Activated CD4-positive, alpha-beta T cell treated with anti-CD3 and anti-CD28 coated beads for 36 hours (primary cell): ENCODE measurements at regions of chr18 and their contacts with region 1.

Region 1: DNA sequence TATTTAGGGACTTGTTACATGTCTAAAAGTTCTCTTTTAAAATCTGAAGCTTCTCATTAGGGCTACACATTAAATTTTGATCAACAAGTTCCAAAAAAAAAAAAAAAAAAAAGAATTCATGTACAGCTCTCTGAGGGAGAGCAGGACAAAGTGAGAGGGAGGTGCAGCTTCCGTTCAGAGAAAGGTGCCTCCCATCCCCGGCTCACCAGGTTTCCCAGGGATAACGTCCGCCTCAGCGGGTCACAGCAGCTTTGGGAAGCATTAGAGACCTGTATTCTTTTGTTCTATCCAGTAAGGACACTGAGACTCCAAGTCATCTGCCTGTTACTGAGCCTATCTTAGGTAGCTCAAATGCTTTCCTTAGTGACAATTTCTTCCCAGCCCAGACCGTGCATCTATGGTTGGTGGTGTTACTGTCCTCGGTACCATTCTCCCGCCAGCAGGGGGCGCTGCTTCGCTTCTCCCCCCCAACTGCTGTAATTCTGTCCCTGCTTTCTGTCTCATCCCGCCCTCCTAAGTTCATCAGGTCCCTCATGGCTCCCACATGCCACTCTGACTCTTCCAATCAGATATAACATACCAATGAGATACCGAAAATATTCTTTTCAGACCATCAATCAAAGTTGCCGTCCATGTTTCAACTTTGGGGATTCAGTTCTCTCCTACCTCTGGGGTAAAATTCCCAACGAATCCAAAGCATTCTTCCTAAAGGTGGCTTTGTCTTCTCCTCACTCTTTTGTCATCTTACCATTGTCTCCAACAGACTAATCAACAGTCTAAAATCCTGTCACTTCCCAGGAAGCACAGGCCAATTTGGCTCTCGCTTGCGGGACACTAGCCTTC is 466.5 kb downstream of the METTL4 start:
- DNase-seq: peak; percentile 72
- ATAC-seq: peak; percentile 47
- H3K4me3 Mint-ChIP-seq: no peak overlapping the region
- H3K27ac Mint-ChIP-seq: no peak overlapping the region
- H3K4me1 Mint-ChIP-seq: no peaks in the 10 kb centered on the region
- H3K27me3 Mint-ChIP-seq: peaks cover 4% of the 10 kb centered on the region

Region 2: DNA sequence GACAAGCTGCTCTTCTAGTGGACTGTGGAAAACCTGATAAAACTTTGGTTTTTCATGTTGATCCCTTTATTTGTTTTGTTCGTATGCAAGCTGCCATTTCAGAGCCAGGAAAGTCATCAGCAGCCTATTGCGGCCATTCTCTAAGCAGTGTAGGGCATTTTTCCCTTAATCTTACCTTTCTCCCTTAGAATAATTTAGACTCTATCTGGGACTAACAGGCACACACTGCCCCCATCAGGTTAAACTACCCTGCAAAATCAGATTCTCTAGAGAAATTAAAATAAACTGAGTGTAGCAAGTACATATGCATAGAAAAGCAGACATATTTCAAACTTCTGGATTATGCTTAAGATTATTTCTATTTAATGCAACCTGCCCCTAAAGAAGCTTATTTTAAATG is 119.0 kb after region 1 on chr18:
- CTCF ChIA-PET with region 1: interaction called, 4 read pairs
- POLR2A ChIA-PET with region 1: no interaction called
- intact Hi-C with region 1: loop called in 1 of 2 experiments (anchors 5 kb)
- DNase-seq: peak; percentile 22
- ATAC-seq: no peak
- H3K4me3 Mint-ChIP-seq: no peak overlapping the region
- H3K27ac Mint-ChIP-seq: no peak overlapping the region
- H3K4me1 Mint-ChIP-seq: no peaks in the 10 kb centered on the region
- H3K27me3 Mint-ChIP-seq: no peaks in the 10 kb centered on the region

Region 3: GRCh38 chr18:2536493-2536892 is 431.7 kb after region 1 on chr18:
- CTCF ChIA-PET with region 1: interaction called, 16 read pairs
- POLR2A ChIA-PET with region 1: no interaction called
- intact Hi-C with region 1: loop called in 1 of 2 experiments (anchors 5 kb)
- DNase-seq: no peak
- ATAC-seq: no peak
- H3K4me3 Mint-ChIP-seq: no peak overlapping the region
- H3K27ac Mint-ChIP-seq: no peak overlapping the region
- H3K4me1 Mint-ChIP-seq: no peaks in the 10 kb centered on the region
- H3K27me3 Mint-ChIP-seq: no peaks in the 10 kb centered on the region

Region 4: DNA sequence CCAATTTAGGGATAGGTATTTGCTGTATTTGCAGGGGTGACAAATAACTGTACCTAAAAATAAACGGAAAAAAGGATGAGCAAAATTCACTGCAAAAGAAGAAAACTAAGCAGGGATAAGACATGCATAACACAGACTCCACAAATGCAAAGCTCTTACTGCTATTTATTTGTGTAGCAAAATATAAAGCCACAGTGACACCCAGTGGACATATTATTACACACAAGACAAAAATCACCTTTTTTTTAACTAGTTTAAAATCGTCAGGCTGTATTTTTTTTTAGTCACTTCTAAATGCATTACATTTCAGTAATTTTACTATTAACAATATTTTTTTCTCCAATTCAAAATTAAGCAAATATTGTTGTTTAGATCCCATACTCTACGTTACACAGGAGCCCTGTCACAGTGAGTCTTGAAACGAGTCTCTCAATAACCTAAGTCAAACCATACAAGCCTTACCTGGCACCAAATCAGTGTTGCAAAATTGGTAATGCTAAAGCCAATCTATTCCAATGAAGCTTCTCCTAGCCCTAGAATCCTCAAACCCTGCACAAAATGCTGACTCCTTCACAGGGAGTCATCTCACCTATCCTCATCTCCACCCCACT is 442.7 kb after region 1 on chr18:
- CTCF ChIA-PET with region 1: interaction called, 16 read pairs
- POLR2A ChIA-PET with region 1: no interaction called
- intact Hi-C with region 1: loop called (anchors 2 to 5 kb)
- DNase-seq: no peak
- ATAC-seq: peak; percentile 58
- H3K4me3 Mint-ChIP-seq: no peak overlapping the region
- H3K27ac Mint-ChIP-seq: no peak overlapping the region
- H3K4me1 Mint-ChIP-seq: peaks cover 7% of the 10 kb centered on the region
- H3K27me3 Mint-ChIP-seq: no peaks in the 10 kb centered on the region

Region 5: DNA sequence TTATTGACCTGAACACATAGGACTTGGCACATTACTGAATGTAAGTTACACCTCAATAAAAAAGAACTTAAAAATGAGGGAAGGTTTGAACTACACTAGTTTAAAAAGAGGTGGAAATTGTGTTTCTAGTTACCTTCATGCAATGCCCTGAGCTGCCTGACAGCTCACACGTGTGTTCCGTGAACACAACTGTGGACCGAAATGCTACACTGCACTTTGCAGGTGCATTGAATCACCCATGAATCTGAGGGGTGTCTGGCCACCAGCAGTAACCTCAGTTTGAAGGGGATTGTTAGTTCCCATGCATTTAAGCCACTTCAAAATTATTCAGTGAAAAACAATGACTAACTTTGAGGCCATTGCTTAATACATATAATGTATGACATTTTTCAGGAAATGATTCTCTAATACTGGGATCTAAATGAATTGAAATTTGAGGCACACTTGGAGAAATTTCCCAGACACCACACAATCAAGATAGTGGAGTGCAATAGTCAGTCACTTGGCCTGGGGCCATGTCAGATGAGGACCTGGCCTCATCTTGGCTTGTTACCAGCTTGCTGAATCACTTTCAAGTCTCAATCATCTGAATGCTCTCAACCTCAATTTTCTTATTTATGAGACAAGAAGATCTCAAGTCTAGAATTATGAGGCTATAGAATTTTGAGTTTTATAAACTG is 1216.4 kb after region 1 on chr18:
- CTCF ChIA-PET with region 1: no interaction called
- POLR2A ChIA-PET with region 1: no interaction called
- intact Hi-C with region 1: no loop called
- DNase-seq: peak; percentile 54
- ATAC-seq: peak; percentile 38
- H3K4me3 Mint-ChIP-seq: no peak overlapping the region
- H3K27ac Mint-ChIP-seq: no peak overlapping the region
- H3K4me1 Mint-ChIP-seq: peaks cover 23% of the 10 kb centered on the region
- H3K27me3 Mint-ChIP-seq: peaks cover 9% of the 10 kb centered on the region